ENCODE measurements at regions of chr10 and their contacts with region 1.

Region 1: DNA sequence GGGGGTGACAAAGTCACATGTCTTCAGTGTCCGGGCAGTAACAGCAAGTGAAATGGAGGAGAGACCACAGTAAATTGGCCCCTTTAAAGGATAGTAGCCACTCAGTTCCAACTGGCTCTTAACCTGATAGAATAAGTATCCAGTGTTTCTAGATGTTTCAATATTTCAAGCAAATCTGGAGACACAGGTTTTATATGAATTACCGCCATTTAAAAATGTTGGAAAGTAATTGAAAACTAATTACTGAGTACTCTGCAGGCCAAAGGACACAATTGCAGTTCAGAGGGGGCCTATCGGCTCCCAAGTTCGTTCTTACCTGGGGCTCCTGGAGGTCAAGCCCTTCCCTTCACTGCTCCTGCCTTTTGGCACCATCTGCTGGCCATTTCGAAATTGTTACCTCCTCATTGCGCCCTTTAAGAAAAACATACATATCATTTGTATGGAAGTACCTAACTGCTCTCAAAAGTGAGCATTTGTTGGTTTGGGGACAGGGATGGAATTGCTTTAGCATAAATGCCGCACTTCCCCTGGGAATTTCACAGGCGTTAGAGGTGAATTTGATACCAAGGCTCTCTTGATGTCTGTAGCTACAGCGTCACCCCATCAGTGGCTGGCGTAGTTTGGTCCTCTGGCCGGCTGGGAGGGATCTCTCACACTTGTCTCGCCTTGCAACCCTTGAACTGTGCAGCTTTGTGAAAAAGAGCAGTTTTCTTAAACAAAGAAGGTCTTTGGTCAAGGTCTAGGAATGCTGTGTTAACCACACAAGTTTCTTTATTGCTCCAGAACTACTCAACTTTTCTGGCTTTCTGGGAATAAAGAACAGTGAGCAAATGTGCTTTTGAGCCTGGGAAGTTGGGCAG is 220.0 kb downstream of the ARHGAP21 start:
- DNase-seq: peak; percentile 66 to 77
- H3K4me3 ChIP-seq: no peak overlapping the region
- H3K27ac ChIP-seq: no peak overlapping the region
- H3K4me1 ChIP-seq: peaks cover 0 to 7% (median 0%) of the 10 kb centered on the region in 4 experiments; a peak in 2 of 7 replicates
- H3K27me3 ChIP-seq: no peaks in the 10 kb centered on the region
- CTCF ChIP-seq: peak; percentile 56 to 84 (median 82)
- EP300 ChIP-seq: no peak
- POLR2A ChIP-seq: peak in 1 of 2 experiments; percentile 31; a peak in 1 of 3 replicates
- RAD21 ChIP-seq: peak; percentile 93 to 97

Region 2: GRCh38 chr10:23994479-23995046 is 509.1 kb before region 1 on chr10:
- CTCF ChIA-PET with region 1: interaction called, 15 read pairs
- POLR2A ChIA-PET with region 1: no interaction called
- DNase-seq: peak; percentile 27 to 84
- H3K4me3 ChIP-seq: no peak overlapping the region
- H3K27ac ChIP-seq: no peak overlapping the region
- H3K4me1 ChIP-seq: no peaks in the 10 kb centered on the region
- H3K27me3 ChIP-seq: no peaks in the 10 kb centered on the region
- CTCF ChIP-seq: peak; percentile 40 to 86 (median 78)
- EP300 ChIP-seq: no peak
- POLR2A ChIP-seq: no peak
- RAD21 ChIP-seq: peak; percentile 94

Region 3: DNA sequence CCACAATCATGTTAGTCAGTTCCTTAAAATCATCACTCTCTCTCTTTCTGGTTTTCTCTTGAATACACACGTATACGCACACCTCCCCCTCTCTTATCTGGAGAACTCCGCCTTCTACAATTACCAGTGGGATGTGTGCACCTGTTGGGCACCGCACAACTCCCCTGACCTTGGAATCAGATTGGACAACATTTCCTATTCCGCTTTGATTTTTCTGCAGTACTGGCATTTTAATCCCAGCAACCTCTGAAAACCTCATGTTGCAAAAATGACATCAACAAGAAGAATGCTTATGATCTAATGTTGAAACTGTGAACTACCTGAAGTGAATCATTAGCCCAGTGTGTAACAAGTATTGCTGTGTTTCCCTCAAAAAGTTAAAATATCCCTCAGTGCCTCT is 185.2 kb before region 1 on chr10:
- CTCF ChIA-PET with region 1: interaction called, 10 read pairs
- POLR2A ChIA-PET with region 1: no interaction called
- DNase-seq: no peak
- H3K4me3 ChIP-seq: no peak overlapping the region
- H3K27ac ChIP-seq: no peak overlapping the region
- H3K4me1 ChIP-seq: no peaks in the 10 kb centered on the region
- H3K27me3 ChIP-seq: peaks cover 0 to 2% (median 0%) of the 10 kb centered on the region in 4 experiments; a peak in 1 of 7 replicates
- CTCF ChIP-seq: no peak
- EP300 ChIP-seq: no peak
- POLR2A ChIP-seq: no peak
- RAD21 ChIP-seq: no peak

Region 4: GRCh38 chr10:24383681-24384106 is 120.0 kb before region 1 on chr10:
- CTCF ChIA-PET with region 1: interaction called, 29 read pairs
- POLR2A ChIA-PET with region 1: no interaction called
- DNase-seq: peak; percentile 75
- H3K4me3 ChIP-seq: no peak overlapping the region
- H3K27ac ChIP-seq: peak overlapping the region; percentile 33; the same call in 1 of the 2 replicates
- H3K4me1 ChIP-seq: peaks cover 6 to 16% (median 11%) of the 10 kb centered on the region in 4 experiments
- H3K27me3 ChIP-seq: no peaks in the 10 kb centered on the region
- CTCF ChIP-seq: peak; percentile 60 to 84 (median 79)
- EP300 ChIP-seq: peak in 1 of 2 experiments; percentile 46; a peak in 1 of 3 replicates
- POLR2A ChIP-seq: no peak
- RAD21 ChIP-seq: peak; percentile 69 to 77

Region 5: GRCh38 chr10:24396398-24396797 is 107.3 kb before region 1 on chr10:
- CTCF ChIA-PET with region 1: interaction called, 12 read pairs
- POLR2A ChIA-PET with region 1: no interaction called
- DNase-seq: no peak
- H3K4me3 ChIP-seq: no peak overlapping the region
- H3K27ac ChIP-seq: no peak overlapping the region
- H3K4me1 ChIP-seq: no peaks in the 10 kb centered on the region
- H3K27me3 ChIP-seq: no peaks in the 10 kb centered on the region
- CTCF ChIP-seq: peak; percentile 24 to 29 (median 25); a peak in 3 of 4 replicates
- EP300 ChIP-seq: no peak
- POLR2A ChIP-seq: no peak
- RAD21 ChIP-seq: peak in 1 of 2 experiments; percentile 26; a peak in 1 of 4 replicates

Region 6: DNA sequence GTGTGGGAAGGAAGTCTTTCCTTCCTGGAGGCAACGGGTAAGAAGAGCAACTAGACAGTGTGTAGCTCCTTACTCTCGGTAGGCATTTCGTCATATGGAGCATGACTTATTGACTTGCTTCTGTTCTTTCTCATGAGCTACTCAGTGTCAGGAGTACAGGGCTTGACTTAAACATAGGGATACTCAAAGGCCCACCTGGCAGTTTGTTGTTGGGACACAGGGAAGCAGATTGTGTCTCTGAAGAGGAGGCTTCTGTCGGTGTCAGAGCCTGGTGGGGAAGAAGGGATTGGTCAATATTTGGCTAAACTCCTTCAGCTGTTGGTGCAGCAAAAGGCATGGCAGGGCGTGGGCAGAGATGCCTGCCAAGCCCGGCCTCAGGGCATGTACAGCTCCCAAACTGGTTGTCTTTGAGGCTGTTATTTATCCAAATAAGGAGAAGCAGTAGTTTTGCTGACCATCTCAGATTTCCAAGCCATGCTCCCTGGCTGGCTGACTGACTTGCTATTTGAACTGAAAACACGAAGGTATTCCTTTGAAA is 45.9 kb before region 1 on chr10:
- CTCF ChIA-PET with region 1: interaction called, 10 read pairs
- POLR2A ChIA-PET with region 1: no interaction called
- DNase-seq: no peak
- H3K4me3 ChIP-seq: no peak overlapping the region
- H3K27ac ChIP-seq: no peak overlapping the region
- H3K4me1 ChIP-seq: peaks cover 0 to 5% (median 2%) of the 10 kb centered on the region in 4 experiments; a peak in 4 of 7 replicates
- H3K27me3 ChIP-seq: no peaks in the 10 kb centered on the region
- CTCF ChIP-seq: no peak
- EP300 ChIP-seq: no peak
- POLR2A ChIP-seq: no peak
- RAD21 ChIP-seq: no peak

Region 7: DNA sequence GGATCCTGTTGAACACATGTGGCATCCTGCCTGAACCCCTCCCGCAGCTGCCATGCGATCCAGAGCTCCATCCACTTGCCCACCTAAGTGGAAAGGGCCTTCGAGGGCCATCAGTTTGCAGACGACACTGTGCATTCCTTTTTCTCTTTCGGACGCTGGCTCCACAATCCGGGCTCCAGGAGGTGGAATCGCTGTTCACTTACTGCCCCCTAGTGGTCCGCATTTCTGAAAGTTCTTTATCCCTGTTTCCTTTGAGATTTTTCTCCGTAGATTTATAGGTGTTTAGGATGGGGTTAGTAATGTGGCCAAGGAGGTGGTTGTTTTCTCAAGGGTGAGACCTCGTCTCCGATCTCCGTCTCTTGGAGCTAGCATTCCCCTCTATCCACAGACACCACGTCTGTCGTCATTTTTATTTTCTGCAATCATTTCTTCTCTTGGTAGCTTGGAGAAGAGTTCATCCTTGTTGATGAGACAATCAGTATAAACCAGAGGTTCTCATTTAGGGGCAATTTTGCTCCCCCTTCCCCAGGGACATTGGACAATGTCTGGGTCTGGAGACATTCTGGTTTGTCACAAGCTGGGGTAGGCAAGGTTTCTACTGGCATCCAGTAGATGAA is 15.4 kb after region 1 on chr10:
- CTCF ChIA-PET with region 1: interaction called, 116 read pairs
- POLR2A ChIA-PET with region 1: no interaction called
- DNase-seq: peak in 1 of 2 experiments; percentile 79
- H3K4me3 ChIP-seq: no peak overlapping the region
- H3K27ac ChIP-seq: no peak overlapping the region
- H3K4me1 ChIP-seq: peaks cover 0 to 3% (median 3%) of the 10 kb centered on the region in 4 experiments; a peak in 4 of 7 replicates
- H3K27me3 ChIP-seq: no peaks in the 10 kb centered on the region
- CTCF ChIP-seq: peak; percentile 56 to 77 (median 66)
- EP300 ChIP-seq: no peak
- POLR2A ChIP-seq: no peak
- RAD21 ChIP-seq: peak; percentile 79 to 82